Head of caudate nucleus (tissue), 42 donors: ENCODE measurements at regions of chr20 and their contacts with region 1.

Region 1: GRCh38 chr20:7859356-7859802 is 80.9 kb downstream of the HAO1 start:
- DNase-seq: peak in 25 of 42 donors; percentile 13 to 73 (median 38)

Region 2: GRCh38 chr20:7113577-7114466 is 745.6 kb before region 1 on chr20:
- intact Hi-C with region 1: loop called (anchors 10 kb)
- DNase-seq: peak in 39 of 42 donors; percentile 11 to 78 (median 41)

Region 3: DNA sequence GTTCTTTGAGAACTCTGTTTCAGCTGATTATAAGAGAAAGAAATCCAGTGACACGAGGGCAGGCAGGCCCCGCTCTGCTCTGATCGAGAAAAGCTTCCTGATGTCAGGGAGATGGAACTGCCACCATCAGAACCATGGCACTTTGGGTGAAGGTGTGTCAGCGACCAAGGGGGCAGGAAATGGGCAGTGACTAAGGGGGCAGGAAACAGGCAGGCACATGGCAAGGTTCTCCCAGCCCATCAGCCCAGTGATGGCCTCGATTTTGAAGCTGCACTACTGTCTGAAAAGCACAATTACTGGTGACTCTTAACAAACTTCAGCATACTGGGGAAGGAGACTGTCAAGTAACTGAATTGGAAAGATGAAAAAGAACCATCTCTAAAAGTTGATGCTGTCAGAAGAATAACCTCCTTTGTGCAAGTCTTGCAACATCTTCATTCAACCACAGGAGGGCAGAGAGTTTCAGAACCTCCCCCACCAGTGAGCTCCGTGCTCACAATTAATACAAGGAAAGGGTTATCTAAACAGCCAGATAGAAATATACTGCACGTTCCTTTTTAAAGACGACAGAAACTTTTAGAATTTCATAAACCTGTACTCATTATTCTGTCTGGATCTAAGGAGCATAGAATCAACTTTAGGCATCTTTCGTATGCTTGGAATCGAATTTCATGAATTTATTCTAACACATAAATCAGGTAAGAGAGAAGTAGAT is 121.1 kb after region 1 on chr20:
- intact Hi-C with region 1: no loop called
- DNase-seq: peak in 31 of 42 donors; percentile 5 to 75 (median 52)